RWPE1 (cell line): ENCODE measurements at regions of chr14 and their contacts with region 1.

Region 1: GRCh38 chr14:20934148-20934762 is 21.0 kb upstream of the RNASE2 start:
- DNase-seq: no peak
- H3K27ac ChIP-seq: no peak overlapping the region
- CTCF ChIP-seq: peak; percentile 36

Region 2: GRCh38 chr14:20970983-20971704 is 36.9 kb after region 1 on chr14:
- CTCF ChIA-PET with region 1: interaction called, 10 read pairs
- POLR2A ChIA-PET with region 1: no interaction called
- DNase-seq: peak; percentile 72
- H3K27ac ChIP-seq: peak overlapping the region; percentile 44
- CTCF ChIP-seq: peak; percentile 93

Region 3: GRCh38 chr14:21136024-21136423 is 201.8 kb after region 1 on chr14:
- CTCF ChIA-PET with region 1: no interaction called
- POLR2A ChIA-PET with region 1: no interaction called
- DNase-seq: peak; percentile 49
- H3K27ac ChIP-seq: no peak overlapping the region
- CTCF ChIP-seq: peak; percentile 79